BJ (cell line): ENCODE measurements at regions of chr10 and their contacts with region 1.

Region 1: GRCh38 chr10:80504158-80504811 is 33.4 kb upstream of the SH2D4B start:
- DNase-seq: no peak
- H3K4me3 ChIP-seq: no peak overlapping the region
- H3K27me3 ChIP-seq: no peaks in the 10 kb centered on the region
- CTCF ChIP-seq: no peak

Region 2: DNA sequence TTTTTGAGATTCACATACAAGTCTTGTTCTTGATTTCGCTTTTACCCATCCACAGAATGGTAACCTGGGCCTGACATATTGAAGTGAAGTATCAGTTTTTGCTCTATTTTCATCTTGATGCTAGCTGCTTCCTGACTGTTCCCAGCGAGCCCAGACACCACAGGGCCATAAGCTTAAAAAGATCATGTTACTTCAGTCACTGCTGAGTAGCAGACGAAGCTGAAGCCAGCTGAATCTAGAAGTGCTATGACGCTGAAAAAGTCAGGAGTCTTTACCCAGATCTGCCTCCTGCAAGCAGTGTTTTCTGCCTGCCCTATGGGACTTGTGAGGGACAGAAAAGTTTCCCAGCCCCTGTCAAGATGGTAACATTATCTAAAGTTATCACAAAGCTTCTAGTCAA is 98.7 kb before region 1 on chr10:
- CTCF ChIA-PET with region 1: no interaction called
- POLR2A ChIA-PET with region 1: no interaction called
- DNase-seq: no peak
- H3K4me3 ChIP-seq: no peak overlapping the region
- H3K27me3 ChIP-seq: peaks cover 4% of the 10 kb centered on the region; the same call in 1 of the 2 replicates
- CTCF ChIP-seq: no peak

Region 3: GRCh38 chr10:80468002-80468401 is 36.3 kb before region 1 on chr10:
- CTCF ChIA-PET with region 1: interaction called, 661 read pairs
- POLR2A ChIA-PET with region 1: no interaction called
- DNase-seq: no peak
- H3K4me3 ChIP-seq: no peak overlapping the region
- H3K27me3 ChIP-seq: no peaks in the 10 kb centered on the region
- CTCF ChIP-seq: no peak

Region 4: GRCh38 chr10:80487791-80488538 is 16.3 kb before region 1 on chr10:
- CTCF ChIA-PET with region 1: interaction called, 12 read pairs
- POLR2A ChIA-PET with region 1: no interaction called
- DNase-seq: no peak
- H3K4me3 ChIP-seq: no peak overlapping the region
- H3K27me3 ChIP-seq: no peaks in the 10 kb centered on the region
- CTCF ChIP-seq: no peak

Region 5: GRCh38 chr10:80518807-80519360 is 14.6 kb after region 1 on chr10:
- CTCF ChIA-PET with region 1: interaction called, 21 read pairs
- POLR2A ChIA-PET with region 1: no interaction called
- DNase-seq: no peak
- H3K4me3 ChIP-seq: no peak overlapping the region
- H3K27me3 ChIP-seq: no peaks in the 10 kb centered on the region
- CTCF ChIP-seq: no peak

Region 6: DNA sequence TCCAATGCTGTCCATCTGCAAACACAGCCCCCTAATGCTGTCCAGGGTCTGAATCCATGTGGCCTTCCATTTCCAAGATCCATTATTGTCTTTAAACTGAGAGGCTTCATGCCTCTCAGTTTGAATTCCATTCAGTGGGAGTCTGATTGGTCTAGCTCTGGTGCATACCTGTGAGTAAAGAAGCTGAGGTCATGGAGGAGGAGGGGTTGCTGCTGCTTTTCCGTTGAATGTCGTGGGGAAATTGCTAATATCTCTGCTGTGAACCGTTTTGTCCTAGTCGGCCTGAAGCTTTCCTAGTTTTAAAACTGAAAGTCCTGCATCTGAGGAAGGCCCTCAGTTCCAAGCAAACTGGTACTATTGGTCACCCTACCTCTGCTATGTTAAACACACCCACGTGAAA is 51.1 kb after region 1 on chr10:
- CTCF ChIA-PET with region 1: no interaction called
- POLR2A ChIA-PET with region 1: no interaction called
- DNase-seq: no peak
- H3K4me3 ChIP-seq: no peak overlapping the region
- H3K27me3 ChIP-seq: peaks cover 5% of the 10 kb centered on the region
- CTCF ChIP-seq: no peak

Region 7: DNA sequence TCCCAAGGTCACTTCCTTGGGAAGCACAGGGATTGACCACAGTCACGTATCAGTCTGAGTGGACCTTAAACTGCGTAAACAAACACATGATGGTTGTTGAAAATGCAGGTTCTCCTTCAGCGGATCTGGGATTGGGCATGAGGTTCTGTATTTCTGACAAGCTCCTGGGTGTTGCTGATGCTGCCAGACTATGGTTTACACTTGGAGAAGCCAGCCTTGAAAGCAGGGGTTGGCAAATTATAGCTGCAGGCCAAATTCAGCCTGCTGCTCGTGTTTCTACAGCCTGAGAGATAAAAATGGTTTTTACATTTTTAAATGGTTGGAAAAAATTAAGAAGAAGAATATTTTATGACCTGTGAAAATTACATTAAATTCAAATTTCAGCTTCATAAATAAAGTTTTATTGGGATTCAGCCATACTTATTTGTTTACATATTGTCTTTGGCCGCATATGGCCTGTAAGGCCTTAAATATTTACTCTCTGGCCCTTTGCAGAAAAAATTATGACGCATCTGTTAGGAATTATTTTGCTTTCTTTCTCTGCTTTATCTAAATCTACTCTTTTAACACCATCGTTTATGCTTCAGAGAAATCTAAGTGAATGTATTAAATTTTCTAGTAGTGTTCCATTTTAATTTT is 143.0 kb after region 1 on chr10:
- CTCF ChIA-PET with region 1: no interaction called
- POLR2A ChIA-PET with region 1: no interaction called
- DNase-seq: no peak
- H3K4me3 ChIP-seq: no peak overlapping the region
- H3K27me3 ChIP-seq: no peaks in the 10 kb centered on the region
- CTCF ChIP-seq: no peak

Region 8: DNA sequence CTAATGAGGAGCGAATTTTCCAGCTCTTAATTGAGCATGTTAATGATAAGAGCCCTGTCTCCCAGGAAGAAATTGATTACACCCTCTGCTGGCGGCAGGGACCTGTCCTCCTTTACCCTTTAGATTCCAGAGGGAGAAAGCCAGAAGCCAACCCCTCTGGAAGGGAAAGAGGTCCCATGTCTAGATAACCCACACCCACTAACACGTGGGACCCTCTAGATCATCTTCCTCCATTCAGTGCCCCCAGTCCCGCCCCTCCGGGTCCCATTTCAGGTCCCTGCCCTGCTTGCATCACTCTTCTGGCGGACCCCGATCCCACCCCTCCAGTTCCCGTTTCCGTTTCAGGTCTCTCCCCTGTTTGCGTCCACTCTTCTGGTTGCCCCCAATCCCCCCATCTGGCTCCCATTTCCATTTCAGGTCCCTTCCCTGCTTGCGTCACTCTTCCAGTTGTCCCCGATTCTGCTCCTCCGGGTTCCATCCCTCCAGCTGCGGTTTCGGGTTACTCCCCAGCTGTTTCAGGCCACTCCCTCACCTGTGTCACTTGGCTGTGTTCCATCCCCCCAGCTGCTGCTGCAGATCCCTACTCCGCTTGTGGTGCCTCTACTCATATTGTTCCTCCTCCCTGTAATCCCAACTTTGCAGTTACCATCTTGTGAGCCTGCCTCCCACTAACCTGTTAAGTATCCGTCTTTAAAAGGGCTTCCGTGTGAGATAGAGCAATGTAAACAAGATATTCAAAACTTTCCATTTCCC is 235.9 kb after region 1 on chr10:
- CTCF ChIA-PET with region 1: no interaction called
- POLR2A ChIA-PET with region 1: no interaction called
- DNase-seq: no peak
- H3K4me3 ChIP-seq: no peak overlapping the region
- H3K27me3 ChIP-seq: no peaks in the 10 kb centered on the region
- CTCF ChIP-seq: no peak